Left colon (tissue), 2 donors: ENCODE measurements at regions of chr3 and their contacts with region 1.

Region 1: GRCh38 chr3:190017521-190018288 is 103.0 kb downstream of the P3H2 start:
- DNase-seq: peak in 1 of 2 donors; percentile 29
- ATAC-seq: peak; percentile 91

Region 2: DNA sequence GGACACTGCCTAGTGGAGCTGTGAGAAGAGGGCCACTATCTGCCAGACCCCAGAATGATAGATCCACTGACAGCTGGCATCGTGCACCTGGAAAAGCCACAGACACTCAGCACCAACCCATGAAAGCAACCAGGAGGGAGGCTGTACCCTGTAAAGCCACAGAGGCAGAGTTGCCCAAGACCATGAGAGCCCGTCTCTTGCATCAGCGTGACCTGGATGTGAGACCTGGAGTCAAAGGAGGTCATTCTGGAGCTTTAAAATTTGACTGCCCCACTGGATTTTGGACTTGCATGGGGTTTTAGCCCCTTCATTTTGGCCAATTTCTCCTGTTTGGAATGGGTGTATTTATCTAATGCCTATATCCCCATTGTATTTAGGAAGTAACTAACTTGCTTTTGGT is 186.5 kb after region 1 on chr3:
- intact Hi-C with region 1: loop called in 1 of 2 experiments (anchors 5 kb)
- DNase-seq: no peak
- ATAC-seq: no peak

Region 3: GRCh38 chr3:190224863-190225692 is 207.4 kb after region 1 on chr3:
- intact Hi-C with region 1: no loop called
- DNase-seq: no peak
- ATAC-seq: peak; percentile 60

Region 4: DNA sequence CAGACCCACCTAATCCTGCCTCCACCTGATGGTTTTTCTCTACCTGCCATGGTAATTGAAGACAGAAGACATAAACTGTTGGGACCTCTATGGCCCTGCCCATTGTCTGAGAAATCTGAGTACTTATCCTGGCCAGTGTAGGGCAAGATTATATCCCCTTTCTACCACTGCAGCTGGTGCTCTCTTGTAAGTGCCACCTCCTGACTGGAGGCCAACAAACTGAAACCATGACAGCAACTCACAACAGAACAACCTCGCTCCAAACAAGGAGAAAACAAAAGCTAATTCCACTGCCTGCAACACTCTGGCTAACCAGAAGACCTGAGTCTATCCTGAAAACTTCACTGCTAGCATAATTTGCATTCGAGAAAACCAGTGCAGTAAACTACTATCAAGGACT is 221.6 kb after region 1 on chr3:
- intact Hi-C with region 1: no loop called
- DNase-seq: no peak
- ATAC-seq: no peak